Mammary epithelial cell (primary cell): ENCODE measurements at regions of chr7 and their contacts with region 1.

Region 1: GRCh38 chr7:138355254-138355653 is 104.8 kb upstream of the TRIM24 start:
- DNase-seq: no peak
- H3K4me3 ChIP-seq: no peak overlapping the region
- H3K27ac ChIP-seq: no peak overlapping the region
- H3K4me1 ChIP-seq: no peaks in the 10 kb centered on the region
- H3K27me3 ChIP-seq: no peaks in the 10 kb centered on the region
- CTCF ChIP-seq: no peak

Region 2: GRCh38 chr7:138483531-138483930 is 128.3 kb after region 1 on chr7:
- CTCF ChIA-PET with region 1: interaction called, 13 read pairs
- dilution Hi-C with region 1: no loop called
- in situ Hi-C with region 1: no loop called
- intact Hi-C with region 1: no loop called
- DNase-seq: no peak
- H3K4me3 ChIP-seq: no peak overlapping the region
- H3K27ac ChIP-seq: no peak overlapping the region
- H3K4me1 ChIP-seq: no peaks in the 10 kb centered on the region
- H3K27me3 ChIP-seq: no peaks in the 10 kb centered on the region
- CTCF ChIP-seq: no peak

Region 3: GRCh38 chr7:138542183-138542582 is 186.9 kb after region 1 on chr7:
- CTCF ChIA-PET with region 1: no interaction called
- dilution Hi-C with region 1: no loop called
- in situ Hi-C with region 1: no loop called
- intact Hi-C with region 1: no loop called
- DNase-seq: no peak
- H3K4me3 ChIP-seq: no peak overlapping the region
- H3K27ac ChIP-seq: no peak overlapping the region
- H3K4me1 ChIP-seq: no peaks in the 10 kb centered on the region
- H3K27me3 ChIP-seq: no peaks in the 10 kb centered on the region
- CTCF ChIP-seq: no peak